CD8-positive, alpha-beta T cell (primary cell): ENCODE measurements at regions of chr3 and their contacts with region 1.

Region 1: DNA sequence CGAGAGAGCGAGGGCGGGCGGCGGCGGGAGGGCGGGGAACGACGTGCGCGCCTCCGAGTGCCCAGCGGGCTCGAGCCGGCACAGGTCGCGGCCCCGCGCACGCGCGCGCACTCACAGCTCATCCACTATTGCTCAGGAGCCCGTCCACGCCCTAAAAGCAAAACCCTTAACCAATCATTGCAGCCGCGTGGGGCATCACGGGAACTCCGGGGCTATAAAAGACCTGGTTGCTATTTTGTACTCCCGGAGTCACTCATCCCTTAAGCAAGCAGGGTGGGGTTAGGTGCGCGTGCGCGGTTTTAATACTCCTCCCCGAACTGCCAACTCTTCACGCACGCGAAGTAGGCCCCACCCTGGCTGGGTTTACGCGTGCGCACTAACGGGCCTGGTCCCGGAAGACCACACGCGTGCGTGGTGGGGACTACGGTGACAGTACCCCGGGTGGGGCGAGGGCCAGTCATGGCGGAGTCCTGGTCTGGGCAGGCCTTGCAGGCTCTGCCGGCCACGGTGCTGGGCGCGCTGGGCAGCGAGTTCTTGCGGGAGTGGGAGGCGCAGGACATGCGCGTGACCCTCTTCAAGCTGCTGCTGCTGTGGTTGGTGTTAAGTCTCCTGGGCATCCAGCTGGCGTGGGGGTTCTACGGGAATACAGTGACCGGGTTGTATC is at the starts of genes RHOA and TCTA:
- DNase-seq: peak; percentile 97 to 100 (median 99)
- ATAC-seq: peak; percentile 85
- H3K4me3 ChIP-seq: peak within 1 kb of the TSS; percentile 81 to 91
- H3K4me3 Mint-ChIP-seq: peak within 1 kb of the TSS; percentile 94
- H3K27ac ChIP-seq: peak within 1 kb of the TSS; percentile 89 to 94
- H3K27ac Mint-ChIP-seq: peak within 1 kb of the TSS; percentile 98
- H3K4me1 ChIP-seq: peaks cover 70% of the 10 kb centered on the region
- H3K4me1 Mint-ChIP-seq: peaks cover 70% of the 10 kb centered on the region
- H3K27me3 ChIP-seq: no peaks in the 10 kb centered on the region
- H3K27me3 Mint-ChIP-seq: no peaks in the 10 kb centered on the region
- CTCF ChIP-seq: no peak
- total RNA-seq, gene RHOA: 271 to 294 TPM
- total RNA-seq, gene TCTA: 19.8 to 21.1 TPM

Region 2: DNA sequence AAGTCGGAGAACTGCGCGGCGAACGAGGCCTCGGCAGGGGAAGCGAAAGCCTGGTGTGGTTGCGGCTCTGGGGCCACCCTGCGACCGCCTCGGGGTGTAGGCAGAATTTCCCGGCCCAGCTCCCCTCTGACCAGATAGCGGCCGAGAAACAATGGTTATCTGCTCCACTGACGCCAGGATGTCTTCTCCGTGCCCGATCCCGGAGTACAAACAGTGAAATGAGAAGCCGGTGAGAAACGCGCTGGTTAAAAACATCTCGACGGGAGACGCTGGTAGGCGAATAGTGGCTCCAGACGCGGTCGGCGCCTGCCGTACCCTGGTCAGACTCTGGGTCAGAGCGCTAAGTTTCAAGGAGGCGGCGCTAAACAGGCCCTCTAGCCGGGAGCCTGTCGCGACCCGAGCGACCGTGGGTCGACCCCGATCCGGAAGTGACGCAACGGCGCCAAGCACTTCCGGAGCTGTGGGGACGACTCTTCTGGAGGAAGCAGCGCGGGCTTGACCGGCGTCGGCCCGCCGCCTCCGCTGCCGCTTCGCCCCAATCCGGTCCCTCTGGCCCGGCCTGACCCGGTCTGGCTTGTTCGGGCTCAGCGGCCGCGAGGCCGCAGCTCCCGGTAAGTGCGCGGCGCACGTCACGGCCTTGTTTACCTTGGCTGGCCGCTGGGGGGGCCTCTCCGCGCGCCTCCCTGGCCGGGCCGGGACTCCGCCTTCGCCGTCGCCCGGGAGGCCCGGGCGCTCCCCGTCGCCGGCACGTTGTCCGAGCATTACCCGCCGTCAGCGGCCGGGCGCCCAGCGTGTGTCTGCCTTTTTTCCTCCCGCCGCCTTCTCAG is 493.5 kb before region 1 on chr3 and contains the start of gene ARIH2:
- CTCF ChIA-PET with region 1: no interaction called
- POLR2A ChIA-PET with region 1: no interaction called
- intact Hi-C with region 1: loop called in 1 of 2 experiments (anchors 5 kb)
- DNase-seq: peak; percentile 74 to 95 (median 88)
- ATAC-seq: peak; percentile 72
- H3K4me3 ChIP-seq: peak within 1 kb of the TSS; percentile 92 to 93
- H3K4me3 Mint-ChIP-seq: peak within 1 kb of the TSS; percentile 98
- H3K27ac ChIP-seq: peak within 1 kb of the TSS; percentile 99
- H3K27ac Mint-ChIP-seq: peak within 1 kb of the TSS; percentile 99
- H3K4me1 ChIP-seq: peaks cover 22% of the 10 kb centered on the region
- H3K4me1 Mint-ChIP-seq: peaks cover 27% of the 10 kb centered on the region
- H3K27me3 ChIP-seq: no peaks in the 10 kb centered on the region
- H3K27me3 Mint-ChIP-seq: no peaks in the 10 kb centered on the region
- CTCF ChIP-seq: peak; percentile 24
- total RNA-seq, gene ARIH2: 225 to 242 TPM

Region 3: DNA sequence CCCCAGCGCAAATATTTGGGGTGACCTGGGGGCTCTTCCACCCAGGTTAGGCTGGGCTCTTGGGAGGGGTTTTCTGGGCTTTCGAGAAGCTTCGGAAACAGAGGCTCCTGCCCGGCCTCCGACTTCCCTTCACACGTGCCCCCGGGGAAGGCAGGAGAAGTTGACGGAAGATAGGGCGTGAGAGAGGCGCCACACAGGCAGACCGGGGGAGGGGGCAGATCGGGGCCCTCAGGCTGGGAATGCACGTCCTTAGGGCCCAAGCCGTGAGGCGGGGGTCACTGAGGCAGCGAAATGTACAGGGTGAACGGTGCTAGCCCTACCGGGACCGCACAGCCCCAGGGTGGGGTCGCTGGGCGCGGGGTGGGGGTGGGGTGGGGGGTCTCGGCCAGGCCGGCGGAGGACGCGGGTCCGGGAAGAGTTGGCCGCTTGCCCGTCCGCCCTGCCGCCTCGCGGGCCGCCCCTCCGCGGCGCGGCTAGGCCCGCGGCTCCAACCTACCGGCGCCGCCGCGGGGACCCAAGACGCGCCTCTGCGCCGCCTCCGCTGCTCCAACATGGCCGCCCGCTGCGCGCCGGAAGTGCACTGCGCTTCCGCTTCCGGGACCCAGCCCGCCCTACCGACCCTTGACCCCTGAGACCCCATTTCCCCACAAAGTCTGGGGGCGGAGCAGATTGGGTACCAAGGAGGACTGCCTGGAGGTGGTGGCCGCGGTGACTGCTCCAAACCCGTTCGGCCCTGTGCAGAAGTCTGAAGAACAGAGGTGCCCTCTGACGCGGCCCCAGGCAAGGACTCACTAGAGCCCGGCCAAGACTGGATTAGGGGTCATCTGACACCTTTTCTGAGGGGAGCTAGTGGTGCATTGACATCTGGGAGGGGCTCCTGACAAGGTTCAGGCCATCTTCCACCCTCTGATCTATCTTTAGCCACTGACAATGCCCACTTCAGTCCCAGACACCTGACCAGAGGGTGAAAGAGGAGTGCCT is 246.0 kb before region 1 on chr3 and contains the start of gene CCDC71:
- CTCF ChIA-PET with region 1: no interaction called
- POLR2A ChIA-PET with region 1: no interaction called
- intact Hi-C with region 1: no loop called
- DNase-seq: peak; percentile 52 to 89 (median 75)
- ATAC-seq: peak; percentile 77
- H3K4me3 ChIP-seq: peak within 1 kb of the TSS; percentile 87 to 92
- H3K4me3 Mint-ChIP-seq: peak within 1 kb of the TSS; percentile 90
- H3K27ac ChIP-seq: peak within 1 kb of the TSS; percentile 60 to 81
- H3K27ac Mint-ChIP-seq: peak within 1 kb of the TSS; percentile 93
- H3K4me1 ChIP-seq: peaks cover 28% of the 10 kb centered on the region
- H3K4me1 Mint-ChIP-seq: peaks cover 44% of the 10 kb centered on the region
- H3K27me3 ChIP-seq: no peaks in the 10 kb centered on the region
- H3K27me3 Mint-ChIP-seq: no peaks in the 10 kb centered on the region
- CTCF ChIP-seq: no peak
- total RNA-seq, gene CCDC71: 15.6 to 15.9 TPM

Region 4: GRCh38 chr3:49324768-49325167 is 87.3 kb before region 1 on chr3:
- CTCF ChIA-PET with region 1: no interaction called
- POLR2A ChIA-PET with region 1: no interaction called
- intact Hi-C with region 1: no loop called
- DNase-seq: no peak
- ATAC-seq: no peak
- H3K4me3 ChIP-seq: no peak overlapping the region
- H3K4me3 Mint-ChIP-seq: no peak overlapping the region
- H3K27ac ChIP-seq: no peak overlapping the region
- H3K27ac Mint-ChIP-seq: no peak overlapping the region
- H3K4me1 ChIP-seq: no peaks in the 10 kb centered on the region
- H3K4me1 Mint-ChIP-seq: peaks cover 10% of the 10 kb centered on the region
- H3K27me3 ChIP-seq: no peaks in the 10 kb centered on the region
- H3K27me3 Mint-ChIP-seq: no peaks in the 10 kb centered on the region
- CTCF ChIP-seq: no peak

Region 5: GRCh38 chr3:49358217-49358883 is 53.8 kb before region 1 on chr3 and contains the start of gene GPX1:
- CTCF ChIA-PET with region 1: no interaction called
- POLR2A ChIA-PET with region 1: interaction called, 12 read pairs
- intact Hi-C with region 1: loop called (anchors 1 kb)
- DNase-seq: peak; percentile 45 to 89 (median 78)
- ATAC-seq: peak; percentile 57
- H3K4me3 ChIP-seq: peak within 1 kb of the TSS; percentile 61 to 73
- H3K4me3 Mint-ChIP-seq: peak within 1 kb of the TSS; percentile 91
- H3K27ac ChIP-seq: peak within 1 kb of the TSS; percentile 62 to 81
- H3K27ac Mint-ChIP-seq: peak within 1 kb of the TSS; percentile 96
- H3K4me1 ChIP-seq: peaks cover 26% of the 10 kb centered on the region
- H3K4me1 Mint-ChIP-seq: peaks cover 41% of the 10 kb centered on the region
- H3K27me3 ChIP-seq: no peaks in the 10 kb centered on the region
- H3K27me3 Mint-ChIP-seq: no peaks in the 10 kb centered on the region
- CTCF ChIP-seq: no peak
- total RNA-seq, gene GPX1: 24.4 to 27.8 TPM

Region 6: GRCh38 chr3:49445381-49445780 is 33.3 kb after region 1 on chr3:
- CTCF ChIA-PET with region 1: interaction called, 47 read pairs
- POLR2A ChIA-PET with region 1: interaction called, 9 read pairs
- intact Hi-C with region 1: loop called (anchors 1 kb)
- DNase-seq: no peak
- ATAC-seq: no peak
- H3K4me3 ChIP-seq: no peak overlapping the region
- H3K4me3 Mint-ChIP-seq: no peak overlapping the region
- H3K27ac ChIP-seq: no peak overlapping the region
- H3K27ac Mint-ChIP-seq: no peak overlapping the region
- H3K4me1 ChIP-seq: peaks cover 13% of the 10 kb centered on the region
- H3K4me1 Mint-ChIP-seq: peaks cover 11% of the 10 kb centered on the region
- H3K27me3 ChIP-seq: no peaks in the 10 kb centered on the region
- H3K27me3 Mint-ChIP-seq: no peaks in the 10 kb centered on the region
- CTCF ChIP-seq: no peak

Region 7: GRCh38 chr3:49469936-49470713 is 58.0 kb after region 1 on chr3 and contains the start of gene DAG1:
- CTCF ChIA-PET with region 1: interaction called, 3 read pairs
- POLR2A ChIA-PET with region 1: interaction called, 4 read pairs
- intact Hi-C with region 1: loop called in 1 of 2 experiments (anchors 1 kb)
- DNase-seq: peak; percentile 89 to 99 (median 95)
- ATAC-seq: peak; percentile 85
- H3K4me3 ChIP-seq: peak within 1 kb of the TSS; percentile 83 to 97
- H3K4me3 Mint-ChIP-seq: peak within 1 kb of the TSS; percentile 88
- H3K27ac ChIP-seq: peak within 1 kb of the TSS; percentile 86 to 87
- H3K27ac Mint-ChIP-seq: peak within 1 kb of the TSS; percentile 94
- H3K4me1 ChIP-seq: peaks cover 21% of the 10 kb centered on the region
- H3K4me1 Mint-ChIP-seq: peaks cover 24% of the 10 kb centered on the region
- H3K27me3 ChIP-seq: no peaks in the 10 kb centered on the region
- H3K27me3 Mint-ChIP-seq: no peaks in the 10 kb centered on the region
- CTCF ChIP-seq: no peak
- total RNA-seq, gene DAG1: 17.0 to 19.9 TPM

Region 8: GRCh38 chr3:49786241-49786958 is 374.3 kb after region 1 on chr3 and contains the start of gene IP6K1:
- CTCF ChIA-PET with region 1: no interaction called
- POLR2A ChIA-PET with region 1: no interaction called
- intact Hi-C with region 1: loop called in 1 of 2 experiments (anchors 5 kb)
- DNase-seq: peak; percentile 98 to 100 (median 99)
- ATAC-seq: peak; percentile 98
- H3K4me3 ChIP-seq: peak within 1 kb of the TSS; percentile 86 to 87
- H3K4me3 Mint-ChIP-seq: peak within 1 kb of the TSS; percentile 95
- H3K27ac ChIP-seq: peak within 1 kb of the TSS; percentile 87 to 94
- H3K27ac Mint-ChIP-seq: peak within 1 kb of the TSS; percentile 99
- H3K4me1 ChIP-seq: peaks cover 29% of the 10 kb centered on the region
- H3K4me1 Mint-ChIP-seq: peaks cover 40% of the 10 kb centered on the region
- H3K27me3 ChIP-seq: no peaks in the 10 kb centered on the region
- H3K27me3 Mint-ChIP-seq: no peaks in the 10 kb centered on the region
- CTCF ChIP-seq: no peak
- total RNA-seq, gene IP6K1: 34.3 to 36.6 TPM